IMR-90 (cell line): ENCODE measurements at regions of chr11 and their contacts with region 1.

Region 1: GRCh38 chr11:61254403-61255025 is 13.5 kb downstream of the PGA5 start:
- DNase-seq: peak; percentile 52
- ATAC-seq: peak; percentile 99
- H3K4me3 ChIP-seq: no peak overlapping the region
- H3K27ac ChIP-seq: no peak overlapping the region
- H3K4me1 ChIP-seq: no peaks in the 10 kb centered on the region
- H3K27me3 ChIP-seq: peaks cover 1% of the 10 kb centered on the region; the same call in 1 of the 2 replicates
- CTCF ChIP-seq: peak; percentile 81
- POLR2A ChIP-seq: no peak
- RAD21 ChIP-seq: peak; percentile 78

Region 2: GRCh38 chr11:61193596-61193995 is 60.9 kb before region 1 on chr11:
- CTCF ChIA-PET with region 1: no interaction called
- POLR2A ChIA-PET with region 1: no interaction called
- dilution Hi-C with region 1: no loop called
- in situ Hi-C with region 1: loop called (anchors 5 kb)
- intact Hi-C with region 1: no loop called
- DNase-seq: no peak
- ATAC-seq: no peak
- H3K4me3 ChIP-seq: no peak overlapping the region
- H3K27ac ChIP-seq: no peak overlapping the region
- H3K4me1 ChIP-seq: no peaks in the 10 kb centered on the region
- H3K27me3 ChIP-seq: peaks cover 24% of the 10 kb centered on the region
- CTCF ChIP-seq: no peak
- POLR2A ChIP-seq: no peak
- RAD21 ChIP-seq: no peak

Region 3: GRCh38 chr11:61294717-61295595 is 40.4 kb after region 1 on chr11 and contains the start of gene VWCE:
- CTCF ChIA-PET with region 1: interaction called, 7 read pairs
- POLR2A ChIA-PET with region 1: no interaction called
- dilution Hi-C with region 1: no loop called
- in situ Hi-C with region 1: no loop called
- intact Hi-C with region 1: loop called (anchors 1 kb)
- DNase-seq: peak; percentile 41
- ATAC-seq: peak; percentile 71
- H3K4me3 ChIP-seq: peak within 1 kb of the TSS; percentile 48
- H3K27ac ChIP-seq: peak within 1 kb of the TSS; percentile 23
- H3K4me1 ChIP-seq: peaks cover 16% of the 10 kb centered on the region
- H3K27me3 ChIP-seq: peaks cover 2% of the 10 kb centered on the region; the same call in 1 of the 2 replicates
- CTCF ChIP-seq: peak; percentile 40
- POLR2A ChIP-seq: no peak
- RAD21 ChIP-seq: peak; percentile 28; the same call in 1 of the 2 replicates
- total RNA-seq, gene VWCE: under 0.01 and 0.28 TPM in 2 replicates

Region 4: DNA sequence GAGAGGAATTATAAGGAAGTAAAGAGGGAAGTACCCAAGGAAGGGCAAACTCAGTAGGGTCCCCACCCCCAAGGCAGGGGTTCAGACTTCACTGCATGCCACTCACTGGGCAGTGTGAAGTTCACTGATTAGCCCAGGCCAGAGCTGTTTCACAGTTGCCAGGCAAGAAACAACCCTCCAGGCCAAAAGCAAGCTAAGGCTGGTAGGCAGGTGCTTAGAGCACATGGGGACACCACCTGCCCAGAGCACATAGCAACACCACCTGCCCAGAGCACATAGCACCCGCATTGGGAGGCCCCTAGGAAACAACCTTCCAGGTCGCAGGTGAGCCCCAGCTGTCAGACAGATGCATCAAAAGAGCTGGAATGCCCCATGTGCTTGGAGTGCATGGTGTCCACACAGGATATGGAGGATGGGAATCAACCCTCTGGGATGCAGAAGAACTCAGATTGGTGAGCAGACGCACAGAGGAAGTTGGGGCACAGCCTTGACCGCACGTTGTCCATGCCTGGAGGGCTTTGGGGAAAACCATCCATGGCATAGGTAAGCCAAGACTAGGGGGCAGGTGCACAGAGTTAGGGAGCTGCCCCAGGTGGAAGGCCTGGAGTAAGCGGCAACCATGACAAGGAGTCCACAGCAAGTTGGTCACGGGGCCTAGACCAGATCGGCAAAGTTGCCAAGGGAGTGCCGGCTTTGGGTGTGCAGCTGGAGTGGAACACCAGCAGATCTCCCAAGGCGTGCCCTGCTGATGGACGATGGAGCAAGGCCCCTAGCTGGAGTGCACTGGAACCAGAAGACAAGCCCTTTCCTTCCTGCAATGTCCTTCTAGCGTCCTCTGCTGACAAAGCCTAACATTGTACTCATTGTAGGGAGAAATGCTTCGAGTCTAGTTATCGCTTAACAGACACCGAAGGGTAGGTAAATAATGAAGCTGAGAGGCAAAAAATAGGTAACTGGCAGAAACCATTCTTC is 130.0 kb after region 1 on chr11:
- CTCF ChIA-PET with region 1: interaction called, 3 read pairs
- POLR2A ChIA-PET with region 1: no interaction called
- dilution Hi-C with region 1: no loop called
- in situ Hi-C with region 1: no loop called
- intact Hi-C with region 1: loop called (anchors 1 kb)
- DNase-seq: peak; percentile 42
- ATAC-seq: peak; percentile 46; the same call in 1 of the 2 replicates
- H3K4me3 ChIP-seq: no peak overlapping the region
- H3K27ac ChIP-seq: no peak overlapping the region
- H3K4me1 ChIP-seq: no peaks in the 10 kb centered on the region
- H3K27me3 ChIP-seq: no peaks in the 10 kb centered on the region
- CTCF ChIP-seq: peak; percentile 39
- POLR2A ChIP-seq: no peak
- RAD21 ChIP-seq: peak; percentile 55